ENCODE measurements at regions of chr9 and their contacts with region 1.

Region 1: GRCh38 chr9:122445155-122445749 is 32.5 kb downstream of the OR1J1 start:
- DNase-seq: no peak
- ATAC-seq: no peak
- H3K4me3 ChIP-seq: no peak overlapping the region
- H3K27ac ChIP-seq: no peak overlapping the region
- H3K4me1 ChIP-seq: peaks cover 7 to 10% of the 10 kb centered on the region in 2 experiments; a peak in 3 of 5 replicates
- H3K27me3 ChIP-seq: no peaks in the 10 kb centered on the region
- CTCF ChIP-seq: no peak
- EP300 ChIP-seq: no peak
- POLR2A ChIP-seq: no peak
- RAD21 ChIP-seq: no peak

Region 2: DNA sequence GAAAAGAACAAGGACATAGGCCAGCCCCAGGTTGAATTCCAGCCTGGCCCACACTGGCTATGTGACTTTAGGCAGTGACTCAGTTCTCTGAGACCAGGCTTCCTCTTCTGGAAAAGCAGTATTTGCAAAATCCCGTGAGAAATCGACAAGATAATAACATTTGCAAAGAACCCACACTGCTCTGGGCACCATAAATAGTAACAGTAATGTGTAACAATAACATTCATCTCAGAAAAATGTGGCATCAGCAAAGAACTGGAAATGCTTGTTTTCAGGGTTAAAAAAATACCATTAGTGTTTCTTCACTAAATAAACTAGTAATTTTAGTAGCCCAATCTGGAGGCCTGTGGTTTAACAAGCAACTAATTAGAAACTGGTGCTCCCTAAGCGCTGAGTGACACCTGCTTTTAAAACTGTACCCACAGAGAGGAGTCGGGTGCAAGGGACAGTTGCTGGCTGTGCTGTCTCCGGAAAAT is 500.5 kb before region 1 on chr9:
- CTCF ChIA-PET with region 1: no interaction called
- POLR2A ChIA-PET with region 1: no interaction called
- in situ Hi-C with region 1: no loop called
- intact Hi-C with region 1: no loop called
- DNase-seq: no peak
- ATAC-seq: no peak
- H3K4me3 ChIP-seq: no peak overlapping the region
- H3K27ac ChIP-seq: no peak overlapping the region
- H3K4me1 ChIP-seq: no peaks in the 10 kb centered on the region
- H3K27me3 ChIP-seq: peaks cover 28 to 48% of the 10 kb centered on the region in 2 experiments
- CTCF ChIP-seq: no peak
- EP300 ChIP-seq: no peak
- POLR2A ChIP-seq: no peak
- RAD21 ChIP-seq: no peak

Region 3: DNA sequence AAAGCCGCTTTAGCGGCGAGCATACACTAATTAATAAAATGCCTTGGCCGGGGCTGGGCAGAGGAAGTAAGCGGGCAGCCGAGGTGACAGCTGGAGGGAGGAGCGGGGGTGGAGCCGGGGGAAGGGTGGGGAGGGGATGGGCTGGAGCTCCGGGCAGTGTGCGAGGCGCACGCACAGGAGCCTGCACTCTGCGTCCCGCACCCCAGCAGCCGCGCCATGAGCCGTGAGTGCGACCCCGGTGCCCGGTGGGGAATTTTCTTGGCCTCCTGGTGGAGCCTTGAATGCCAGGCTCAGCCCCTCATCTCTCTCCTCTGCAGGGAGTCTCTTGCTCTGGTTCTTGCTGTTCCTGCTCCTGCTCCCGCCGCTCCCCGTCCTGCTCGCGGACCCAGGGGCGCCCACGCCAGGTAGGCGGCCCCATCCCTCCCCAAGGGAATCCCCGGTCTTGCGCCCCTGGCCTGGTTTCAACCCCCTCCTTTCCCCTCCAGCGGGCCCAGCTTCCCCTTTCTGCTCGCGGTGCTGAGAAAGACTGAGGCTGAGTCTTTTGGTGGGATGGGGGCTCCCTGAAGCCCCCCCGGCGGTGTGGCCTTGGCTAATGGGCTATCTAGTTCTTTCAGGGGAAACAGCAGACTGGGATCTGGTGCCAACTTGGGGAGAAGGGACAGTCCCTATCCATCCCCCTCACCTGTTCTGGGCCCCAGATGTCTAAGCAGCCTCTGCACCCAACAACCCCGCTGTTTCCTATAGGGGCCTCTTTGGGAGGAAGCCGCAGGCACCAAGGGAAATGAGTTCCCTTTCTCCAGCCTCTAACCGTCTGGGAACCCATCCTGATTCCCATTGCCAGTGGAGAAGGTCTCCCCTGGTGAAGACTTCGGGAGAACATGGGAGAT is 74.1 kb before region 1 on chr9 and contains the start of gene PTGS1:
- CTCF ChIA-PET with region 1: no interaction called
- POLR2A ChIA-PET with region 1: no interaction called
- in situ Hi-C with region 1: loop called (anchors 10 kb)
- intact Hi-C with region 1: no loop called
- DNase-seq: peak; percentile 64 to 80 (median 76)
- ATAC-seq: peak; percentile 80
- H3K4me3 ChIP-seq: peak within 1 kb of the TSS; percentile 44
- H3K27ac ChIP-seq: no peak within 1 kb of the TSS
- H3K4me1 ChIP-seq: peaks cover 33 to 38% of the 10 kb centered on the region in 2 experiments
- H3K27me3 ChIP-seq: 0 out of 5 replicates have a peak, but pooled peaks cover 0 to 2% of the 10 kb centered on the region in 2 experiments
- CTCF ChIP-seq: no peak
- EP300 ChIP-seq: no peak
- POLR2A ChIP-seq: 0 out of 2 replicates have a peak, but pooled peaks have one; percentile 31
- RAD21 ChIP-seq: no peak
- polyA plus RNA-seq, gene PTGS1: 3.7 to 8.2 TPM